ENCODE measurements at regions of chr7 and their contacts with region 1.

Region 1: GRCh38 chr7:32495298-32496176 is at the start of gene AVL9:
- DNase-seq: peak; percentile 98
- ATAC-seq: peak; percentile 96
- H3K4me3 Mint-ChIP-seq: peak within 1 kb of the TSS; percentile 93
- H3K27ac Mint-ChIP-seq: peak within 1 kb of the TSS; percentile 96
- H3K4me1 Mint-ChIP-seq: peaks cover 41% of the 10 kb centered on the region
- H3K27me3 Mint-ChIP-seq: no peaks in the 10 kb centered on the region
- CTCF ChIP-seq: no peak
- total RNA-seq, gene AVL9: 36.6 and 52.5 TPM in 2 replicates

Region 2: GRCh38 chr7:32515890-32516550 is 20.5 kb after region 1 on chr7:
- CTCF ChIA-PET with region 1: no interaction called
- POLR2A ChIA-PET with region 1: interaction called, 8 read pairs
- intact Hi-C with region 1: loop called (anchors 2 kb)
- DNase-seq: no peak
- ATAC-seq: peak; percentile 34
- H3K4me3 Mint-ChIP-seq: peak overlapping the region; percentile 21
- H3K27ac Mint-ChIP-seq: peak overlapping the region; percentile 65
- H3K4me1 Mint-ChIP-seq: peaks cover 58% of the 10 kb centered on the region
- H3K27me3 Mint-ChIP-seq: no peaks in the 10 kb centered on the region
- CTCF ChIP-seq: no peak

Region 3: DNA sequence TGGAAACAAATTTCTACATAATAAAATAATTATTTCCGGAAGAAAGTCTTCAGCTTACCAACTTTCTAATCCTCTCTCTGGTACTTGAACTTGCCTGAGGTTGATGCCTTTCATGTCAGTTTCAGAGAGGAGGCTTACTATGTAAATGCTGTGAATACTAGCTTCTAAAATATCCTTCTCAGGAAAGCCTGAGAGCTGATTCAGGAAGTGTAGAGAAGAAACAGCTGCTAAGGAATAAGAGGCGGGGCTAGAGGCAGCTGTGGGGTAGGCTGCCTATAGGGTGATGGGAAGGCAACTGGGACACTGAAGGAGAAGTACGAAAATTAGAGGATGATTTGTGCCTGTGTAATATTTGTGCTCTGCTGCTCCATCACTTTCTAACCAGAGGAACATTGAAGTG is 69.0 kb after region 1 on chr7:
- CTCF ChIA-PET with region 1: no interaction called
- POLR2A ChIA-PET with region 1: interaction called, 4 read pairs
- intact Hi-C with region 1: loop called (anchors 5 kb)
- DNase-seq: no peak
- ATAC-seq: no peak
- H3K4me3 Mint-ChIP-seq: no peak overlapping the region
- H3K27ac Mint-ChIP-seq: no peak overlapping the region
- H3K4me1 Mint-ChIP-seq: peaks cover 1% of the 10 kb centered on the region
- H3K27me3 Mint-ChIP-seq: no peaks in the 10 kb centered on the region
- CTCF ChIP-seq: no peak

Region 4: GRCh38 chr7:32891800-32892520 is 396.4 kb after region 1 on chr7:
- CTCF ChIA-PET with region 1: no interaction called
- POLR2A ChIA-PET with region 1: interaction called, 13 read pairs
- intact Hi-C with region 1: loop called (anchors 1 kb)
- DNase-seq: peak; percentile 96
- ATAC-seq: peak; percentile 66
- H3K4me3 Mint-ChIP-seq: peak overlapping the region; percentile 91
- H3K27ac Mint-ChIP-seq: peak overlapping the region; percentile 97
- H3K4me1 Mint-ChIP-seq: peaks cover 56% of the 10 kb centered on the region
- H3K27me3 Mint-ChIP-seq: no peaks in the 10 kb centered on the region
- CTCF ChIP-seq: no peak

Region 5: GRCh38 chr7:33128990-33129805 is 633.7 kb after region 1 on chr7 and contains the start of gene BBS9:
- CTCF ChIA-PET with region 1: no interaction called
- POLR2A ChIA-PET with region 1: no interaction called
- intact Hi-C with region 1: loop called (anchors 1 kb)
- DNase-seq: peak; percentile 90
- ATAC-seq: peak; percentile 92
- H3K4me3 Mint-ChIP-seq: peak within 1 kb of the TSS; percentile 94
- H3K27ac Mint-ChIP-seq: peak within 1 kb of the TSS; percentile 92
- H3K4me1 Mint-ChIP-seq: peaks cover 18% of the 10 kb centered on the region
- H3K27me3 Mint-ChIP-seq: no peaks in the 10 kb centered on the region
- CTCF ChIP-seq: no peak
- total RNA-seq, gene BBS9: 18.3 and 18.6 TPM in 2 replicates